ENCODE measurements at regions of chr2 and their contacts with region 1.

Region 1: GRCh38 chr2:26735883-26736588 is 28.0 kb upstream of the SLC35F6 start:
- DNase-seq: no peak
- ATAC-seq: peak; percentile 80
- H3K4me3 ChIP-seq: no peak overlapping the region
- H3K27ac ChIP-seq: peak overlapping the region; percentile 54
- H3K4me1 ChIP-seq: peaks cover 19% of the 10 kb centered on the region
- H3K27me3 ChIP-seq: no peaks in the 10 kb centered on the region
- CTCF ChIP-seq: no peak

Region 2: DNA sequence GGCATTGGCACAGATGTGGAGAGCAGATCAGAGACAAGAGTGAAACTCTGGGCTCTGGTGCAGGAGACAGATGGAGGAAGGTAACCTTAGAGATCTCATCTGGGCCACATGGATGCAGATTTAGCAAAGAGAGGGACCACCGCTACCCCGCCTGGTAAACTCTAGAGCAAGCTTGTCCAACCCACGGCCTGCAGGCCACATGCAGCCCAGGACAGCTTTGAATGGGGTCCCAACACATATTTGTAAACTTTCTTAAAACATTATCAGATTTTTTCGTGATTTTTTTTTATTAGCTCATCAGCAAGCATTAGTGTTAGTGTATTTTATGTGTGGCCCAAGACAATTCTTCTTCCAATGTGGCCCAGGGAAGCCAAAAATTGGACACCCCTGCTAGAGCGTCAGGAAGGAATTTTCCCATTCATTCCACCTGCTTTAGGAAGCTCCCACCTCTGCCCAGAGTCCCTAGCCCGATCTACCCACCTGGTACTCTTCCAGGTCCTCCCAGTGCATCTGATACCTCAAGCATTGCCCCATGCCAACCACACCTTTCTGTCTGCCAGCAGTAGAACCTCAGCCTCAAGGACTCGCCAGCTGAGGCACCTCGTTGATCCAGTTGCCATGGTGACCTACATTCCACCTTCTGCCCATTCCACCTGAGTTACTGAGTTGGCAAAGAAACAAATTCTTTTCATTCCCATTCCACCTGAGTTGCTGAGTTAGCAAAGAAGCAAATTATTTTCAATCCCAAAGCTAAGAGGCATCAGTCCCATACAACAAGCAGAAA is 95.1 kb before region 1 on chr2 and contains the start of gene CIB4:
- CTCF ChIA-PET with region 1: no interaction called
- POLR2A ChIA-PET with region 1: interaction called, 16 read pairs
- in situ Hi-C with region 1: no loop called
- intact Hi-C with region 1: no loop called
- DNase-seq: no peak
- ATAC-seq: no peak
- H3K4me3 ChIP-seq: no peak within 1 kb of the TSS
- H3K27ac ChIP-seq: no peak within 1 kb of the TSS
- H3K4me1 ChIP-seq: no peaks in the 10 kb centered on the region
- H3K27me3 ChIP-seq: 0 out of 2 replicates have a peak, but pooled peaks cover 2% of the 10 kb centered on the region
- CTCF ChIP-seq: no peak
- total RNA-seq, gene CIB4: 0.33 TPM

Region 3: GRCh38 chr2:26770986-26771602 is 35.1 kb after region 1 on chr2:
- CTCF ChIA-PET with region 1: no interaction called
- POLR2A ChIA-PET with region 1: no interaction called
- in situ Hi-C with region 1: no loop called
- intact Hi-C with region 1: no loop called
- DNase-seq: no peak
- ATAC-seq: peak; percentile 59
- H3K4me3 ChIP-seq: no peak overlapping the region
- H3K27ac ChIP-seq: peak overlapping the region; percentile 86
- H3K4me1 ChIP-seq: peaks cover 59% of the 10 kb centered on the region
- H3K27me3 ChIP-seq: no peaks in the 10 kb centered on the region
- CTCF ChIP-seq: no peak

Region 4: GRCh38 chr2:27162151-27163121 is 426.4 kb after region 1 on chr2:
- CTCF ChIA-PET with region 1: no interaction called
- POLR2A ChIA-PET with region 1: no interaction called
- in situ Hi-C with region 1: no loop called
- intact Hi-C with region 1: no loop called
- DNase-seq: no peak
- ATAC-seq: no peak
- H3K4me3 ChIP-seq: peak overlapping the region; percentile 21 to 43; a peak in 3 of 4 replicates
- H3K27ac ChIP-seq: peak overlapping the region; percentile 61
- H3K4me1 ChIP-seq: no peaks in the 10 kb centered on the region
- H3K27me3 ChIP-seq: no peaks in the 10 kb centered on the region
- CTCF ChIP-seq: no peak